Left cardiac atrium (tissue), 4 donors: ENCODE measurements at regions of chr6 and their contacts with region 1.

Region 1: DNA sequence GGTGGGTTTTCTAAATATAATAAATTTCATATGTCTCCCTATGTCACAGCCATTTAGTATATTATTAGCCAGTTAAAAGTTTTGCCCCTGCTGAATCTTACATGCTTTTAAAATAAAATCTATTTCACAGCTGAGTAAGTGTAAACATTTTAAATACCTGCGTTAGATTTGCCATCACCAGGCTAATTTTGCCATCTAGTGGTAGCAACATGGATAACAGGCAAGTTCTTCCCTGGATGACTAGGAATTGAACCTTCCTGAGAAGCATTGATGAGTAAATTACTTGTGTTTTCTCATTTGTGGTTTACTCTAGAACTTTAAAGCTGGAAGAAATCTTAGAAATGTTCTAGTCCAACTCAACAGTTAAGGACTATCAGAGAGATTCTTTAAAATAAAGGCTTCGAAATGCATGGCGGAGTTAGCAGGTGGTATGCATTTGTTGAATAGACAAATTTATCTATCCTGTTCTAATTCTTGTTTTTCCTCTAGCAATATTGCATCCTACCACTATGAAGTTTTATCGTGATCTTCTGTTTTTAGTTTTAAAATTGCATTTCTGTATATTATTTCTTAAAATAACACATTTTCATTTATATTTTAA is 2.6 kb downstream of the PRSS35 start:
- DNase-seq: no peak
- ATAC-seq: no peak

Region 2: DNA sequence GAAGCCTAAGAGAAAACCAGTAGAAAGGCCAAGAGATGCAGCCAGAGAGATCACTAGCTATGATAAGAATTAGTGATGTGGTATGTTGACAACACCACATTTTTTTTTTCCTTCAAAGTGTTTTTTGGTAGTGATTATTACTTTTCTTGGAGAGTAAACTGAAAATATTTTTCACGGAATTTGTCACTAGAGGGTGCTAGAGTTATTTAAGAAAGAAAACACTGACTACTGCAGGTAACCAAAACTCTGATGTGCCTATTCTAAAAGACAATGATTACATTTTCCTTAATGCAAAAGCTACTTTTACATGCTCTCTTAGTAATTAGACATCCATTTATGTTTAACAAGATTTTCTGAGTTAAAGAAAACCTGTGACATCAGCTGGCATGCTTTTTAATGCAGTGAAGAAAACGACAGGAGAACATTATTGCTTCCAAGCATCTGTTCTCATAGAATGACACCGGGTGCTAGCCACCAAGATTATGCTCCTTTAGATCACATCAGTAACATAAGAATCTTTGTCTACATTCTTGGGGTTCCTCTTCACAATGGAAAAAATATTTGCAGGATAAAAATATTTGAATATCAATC is 293.0 kb before region 1 on chr6:
- intact Hi-C with region 1: loop called (anchors 2 to 5 kb)
- DNase-seq: no peak
- ATAC-seq: peak in 1 of 2 donors; percentile 35

Region 3: DNA sequence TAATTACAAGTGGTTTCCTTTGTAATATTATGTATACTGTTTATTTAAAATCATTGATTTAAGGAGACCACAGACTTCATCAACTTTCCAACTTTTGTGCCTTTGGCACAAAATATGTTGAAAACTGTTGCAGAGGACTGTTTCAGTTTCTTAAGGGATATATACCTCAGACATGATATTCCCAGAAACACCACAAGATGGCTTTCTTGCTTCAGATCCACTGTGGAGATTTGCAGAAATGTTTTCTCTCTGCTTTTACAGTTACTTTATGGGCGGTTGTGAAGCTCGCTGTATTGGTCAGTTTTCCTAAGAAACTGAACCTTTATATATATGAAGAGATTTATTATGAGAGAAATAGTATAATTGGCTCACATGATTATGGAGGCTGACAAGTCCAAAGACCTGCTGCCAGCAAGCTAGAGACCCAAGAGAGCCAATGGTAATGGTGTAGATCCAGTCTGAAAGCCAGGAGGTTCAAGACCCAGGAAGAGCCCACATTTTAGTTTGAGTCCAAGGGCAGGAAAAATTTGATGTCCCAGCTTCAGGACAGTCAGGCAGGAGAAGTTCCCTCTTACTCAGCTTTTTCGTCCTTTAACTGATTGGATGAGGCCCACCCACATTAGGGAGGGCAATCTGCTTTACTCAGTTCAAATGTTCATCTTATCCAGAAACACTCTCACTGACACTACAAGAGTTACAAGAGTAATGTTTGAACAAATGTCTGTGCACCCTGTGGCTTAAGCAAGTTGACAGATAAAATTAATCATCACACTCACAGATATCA is 96.9 kb before region 1 on chr6:
- intact Hi-C with region 1: loop called (anchors 2 to 5 kb)
- DNase-seq: no peak
- ATAC-seq: peak; percentile 66 to 68

Region 4: GRCh38 chr6:83884523-83884922 is 369.6 kb after region 1 on chr6:
- intact Hi-C with region 1: no loop called
- DNase-seq: no peak
- ATAC-seq: peak; percentile 31 to 59

Region 5: GRCh38 chr6:83908813-83909212 is 393.8 kb after region 1 on chr6:
- intact Hi-C with region 1: no loop called
- DNase-seq: no peak
- ATAC-seq: no peak